MCF 10A (cell line): ENCODE measurements at regions of chr2 and their contacts with region 1.

Region 1: DNA sequence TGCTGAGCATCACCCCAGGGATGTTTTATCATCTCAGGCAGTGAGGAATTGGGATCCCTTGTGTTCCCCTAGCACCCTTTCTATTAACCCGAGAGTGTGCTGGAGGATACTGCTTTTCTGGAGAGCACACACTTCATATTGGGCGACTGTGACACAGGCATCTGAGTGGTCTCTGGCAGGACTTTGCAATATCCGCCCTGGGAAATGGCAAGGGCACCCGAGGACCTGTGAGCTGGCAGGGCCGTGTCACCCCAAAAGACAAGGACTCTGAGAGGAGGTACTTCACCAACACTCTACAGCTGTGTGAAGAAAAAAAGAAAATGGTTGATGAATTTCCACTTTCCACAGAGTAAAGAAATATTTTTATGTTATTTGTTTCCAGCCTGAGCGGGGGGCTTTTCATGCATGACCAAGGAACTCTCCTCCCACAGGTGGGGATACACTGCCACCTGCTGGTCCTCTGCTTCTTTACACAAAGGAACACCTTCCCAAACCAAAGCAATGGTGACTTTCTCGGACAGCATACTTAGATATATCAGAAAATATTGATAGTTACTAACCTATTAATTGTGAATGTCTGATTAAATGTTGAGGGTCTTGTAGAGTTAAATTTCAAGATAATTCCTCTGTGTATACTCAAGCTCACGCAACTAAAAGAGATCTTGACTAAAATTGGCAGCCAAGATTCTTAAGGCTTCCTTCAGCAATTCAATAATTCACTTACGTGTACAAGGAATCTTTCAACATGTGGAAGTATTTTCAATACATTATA is 45.9 kb upstream of the REG3G start:
- DNase-seq: peak; percentile 30
- H3K4me3 Mint-ChIP-seq: no peak overlapping the region
- H3K27ac Mint-ChIP-seq: no peak overlapping the region
- H3K4me1 Mint-ChIP-seq: no peaks in the 10 kb centered on the region
- H3K27me3 Mint-ChIP-seq: peaks cover 33% of the 10 kb centered on the region
- CTCF ChIP-seq: peak; percentile 79

Region 2: GRCh38 chr2:78351208-78351607 is 628.4 kb before region 1 on chr2:
- CTCF ChIA-PET with region 1: interaction called, 9 read pairs
- POLR2A ChIA-PET with region 1: no interaction called
- intact Hi-C with region 1: loop called (anchors 2 kb)
- DNase-seq: peak; percentile 3
- H3K4me3 Mint-ChIP-seq: no peak overlapping the region
- H3K27ac Mint-ChIP-seq: no peak overlapping the region
- H3K4me1 Mint-ChIP-seq: no peaks in the 10 kb centered on the region
- H3K27me3 Mint-ChIP-seq: peaks cover 25% of the 10 kb centered on the region
- CTCF ChIP-seq: no peak

Region 3: DNA sequence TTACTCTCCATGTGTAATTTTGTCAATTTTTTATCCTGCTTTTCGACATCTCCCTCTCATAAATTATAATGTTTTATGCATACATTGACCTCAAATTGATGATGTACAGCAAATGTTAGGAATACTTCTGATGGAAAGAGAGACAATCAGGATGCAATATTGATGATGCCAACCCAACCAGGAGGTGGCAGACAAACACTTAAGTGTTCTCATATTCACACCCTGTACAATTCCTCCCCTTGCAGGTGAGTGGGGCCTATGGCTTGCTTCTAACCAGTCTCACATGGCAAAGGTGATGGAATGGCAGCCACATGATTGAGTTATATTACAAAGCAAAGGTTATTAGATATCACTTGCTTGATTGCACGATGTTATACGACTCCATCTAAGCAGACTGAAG is 548.3 kb before region 1 on chr2:
- CTCF ChIA-PET with region 1: no interaction called
- POLR2A ChIA-PET with region 1: no interaction called
- intact Hi-C with region 1: loop called (anchors 2 kb)
- DNase-seq: peak; percentile 16
- H3K4me3 Mint-ChIP-seq: no peak overlapping the region
- H3K27ac Mint-ChIP-seq: no peak overlapping the region
- H3K4me1 Mint-ChIP-seq: no peaks in the 10 kb centered on the region
- H3K27me3 Mint-ChIP-seq: peaks cover 20% of the 10 kb centered on the region
- CTCF ChIP-seq: peak; percentile 15

Region 4: DNA sequence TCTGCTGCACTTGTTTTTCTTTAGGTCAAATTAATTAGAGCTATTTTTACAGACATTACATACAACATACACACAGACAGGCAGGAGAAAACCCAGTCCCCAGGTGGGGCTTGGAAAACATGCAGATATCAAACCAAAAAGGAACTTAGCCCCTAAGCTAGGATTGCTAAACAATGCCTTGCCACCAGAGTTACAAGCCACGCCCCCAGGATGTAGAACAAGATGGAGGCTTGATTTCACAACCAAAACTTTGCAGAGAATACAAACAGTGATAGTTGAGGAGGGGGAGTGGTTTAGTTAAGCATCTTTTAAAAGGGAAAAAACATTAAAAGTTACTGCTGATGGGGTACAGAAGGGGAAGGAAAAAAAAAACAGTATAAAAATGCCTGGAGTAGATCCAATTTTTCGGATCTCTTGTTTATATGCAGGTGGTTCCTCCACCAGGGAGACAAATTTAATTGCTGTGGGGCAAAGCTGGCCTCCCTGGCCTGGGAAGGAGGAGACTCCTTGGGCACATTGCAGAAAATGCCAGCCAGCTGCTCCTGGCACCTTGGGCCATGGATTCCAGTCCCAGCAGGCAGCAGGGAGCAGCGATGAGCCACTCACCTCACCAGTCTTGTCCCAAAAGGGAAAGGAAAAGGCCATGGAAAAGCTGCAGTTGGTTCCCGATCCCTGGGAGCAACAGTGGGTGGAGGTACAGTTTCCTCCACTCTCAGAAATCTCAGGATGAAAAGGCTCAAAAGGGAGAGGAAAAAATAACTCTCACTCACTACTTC is 302.5 kb before region 1 on chr2:
- CTCF ChIA-PET with region 1: interaction called, 6 read pairs
- POLR2A ChIA-PET with region 1: no interaction called
- intact Hi-C with region 1: loop called (anchors 5 kb)
- DNase-seq: no peak
- H3K4me3 Mint-ChIP-seq: no peak overlapping the region
- H3K27ac Mint-ChIP-seq: no peak overlapping the region
- H3K4me1 Mint-ChIP-seq: no peaks in the 10 kb centered on the region
- H3K27me3 Mint-ChIP-seq: no peaks in the 10 kb centered on the region
- CTCF ChIP-seq: no peak

Region 5: GRCh38 chr2:78908973-78909372 is 70.6 kb before region 1 on chr2:
- CTCF ChIA-PET with region 1: no interaction called
- POLR2A ChIA-PET with region 1: no interaction called
- intact Hi-C with region 1: no loop called
- DNase-seq: no peak
- H3K4me3 Mint-ChIP-seq: no peak overlapping the region
- H3K27ac Mint-ChIP-seq: no peak overlapping the region
- H3K4me1 Mint-ChIP-seq: no peaks in the 10 kb centered on the region
- H3K27me3 Mint-ChIP-seq: no peaks in the 10 kb centered on the region
- CTCF ChIP-seq: no peak

Region 6: GRCh38 chr2:78967294-78967693 is 12.3 kb before region 1 on chr2:
- CTCF ChIA-PET with region 1: interaction called, 12 read pairs
- POLR2A ChIA-PET with region 1: interaction called, 3 read pairs
- intact Hi-C with region 1: no loop called
- DNase-seq: peak; percentile 1
- H3K4me3 Mint-ChIP-seq: no peak overlapping the region
- H3K27ac Mint-ChIP-seq: no peak overlapping the region
- H3K4me1 Mint-ChIP-seq: no peaks in the 10 kb centered on the region
- H3K27me3 Mint-ChIP-seq: peaks cover 3% of the 10 kb centered on the region
- CTCF ChIP-seq: no peak

Region 7: GRCh38 chr2:78993518-78994148 is 14.1 kb after region 1 on chr2:
- CTCF ChIA-PET with region 1: interaction called, 19 read pairs
- POLR2A ChIA-PET with region 1: no interaction called
- intact Hi-C with region 1: no loop called
- DNase-seq: no peak
- H3K4me3 Mint-ChIP-seq: no peak overlapping the region
- H3K27ac Mint-ChIP-seq: no peak overlapping the region
- H3K4me1 Mint-ChIP-seq: no peaks in the 10 kb centered on the region
- H3K27me3 Mint-ChIP-seq: peaks cover 20% of the 10 kb centered on the region
- CTCF ChIP-seq: no peak

Region 8: DNA sequence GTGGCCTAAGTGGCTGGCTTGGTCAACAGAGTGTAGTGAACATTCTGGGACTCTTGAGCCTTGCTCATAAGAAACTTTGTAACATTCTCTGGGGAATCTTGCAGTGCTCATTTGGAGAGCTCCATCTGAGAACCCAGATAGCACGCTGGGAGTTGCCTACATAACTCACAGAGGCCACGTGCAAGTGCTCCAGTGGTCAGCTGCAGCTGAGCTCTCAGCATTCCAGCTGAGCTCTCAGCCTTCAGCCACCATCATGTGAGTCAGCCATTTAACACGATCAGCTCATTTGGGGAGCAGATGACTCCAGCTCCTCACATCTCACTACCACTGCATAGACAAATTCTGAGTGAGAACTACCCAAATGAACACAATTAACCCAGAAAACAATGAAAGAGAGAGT is 507.8 kb after region 1 on chr2:
- CTCF ChIA-PET with region 1: no interaction called
- POLR2A ChIA-PET with region 1: no interaction called
- intact Hi-C with region 1: no loop called
- DNase-seq: no peak
- H3K4me3 Mint-ChIP-seq: no peak overlapping the region
- H3K27ac Mint-ChIP-seq: no peak overlapping the region
- H3K4me1 Mint-ChIP-seq: no peaks in the 10 kb centered on the region
- H3K27me3 Mint-ChIP-seq: no peaks in the 10 kb centered on the region
- CTCF ChIP-seq: no peak